IMR-90 (cell line): ENCODE measurements at regions of chr2 and their contacts with region 1.

Region 1: GRCh38 chr2:33275689-33276444 is 200.6 kb upstream of the RASGRP3 start:
- DNase-seq: peak; percentile 96
- ATAC-seq: peak; percentile 79
- H3K4me3 ChIP-seq: no peak overlapping the region
- H3K27ac ChIP-seq: 0 out of 2 replicates have a peak overlapping the region, but pooled peaks have one; percentile 0
- H3K4me1 ChIP-seq: peaks cover 3% of the 10 kb centered on the region; the same call in 1 of the 2 replicates
- H3K27me3 ChIP-seq: no peaks in the 10 kb centered on the region
- CTCF ChIP-seq: no peak
- POLR2A ChIP-seq: no peak
- RAD21 ChIP-seq: no peak

Region 2: DNA sequence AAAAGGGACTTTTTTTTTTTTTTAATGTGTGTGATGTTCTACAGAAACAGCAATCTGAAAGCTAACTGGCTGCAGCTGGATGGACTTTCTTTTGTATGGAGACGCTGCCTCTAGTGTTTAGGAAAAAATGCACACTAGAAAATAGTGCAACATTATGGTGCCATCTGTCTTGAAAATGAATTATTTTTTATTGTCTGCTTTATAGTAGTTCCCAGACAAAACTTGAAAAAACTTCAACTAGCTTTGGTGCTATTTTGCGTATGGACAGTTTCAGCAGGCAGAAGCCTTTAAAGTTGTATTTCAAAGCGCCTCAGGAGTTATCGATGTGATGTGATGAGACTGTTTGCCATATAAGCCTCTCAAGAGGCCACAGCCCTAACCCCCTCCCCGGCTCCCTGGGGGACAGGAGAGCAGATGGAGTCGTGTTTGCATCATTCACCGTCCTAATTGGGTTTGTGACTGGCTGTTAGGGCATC is 242.2 kb before region 1 on chr2:
- CTCF ChIA-PET with region 1: interaction called, 9 read pairs
- POLR2A ChIA-PET with region 1: no interaction called
- dilution Hi-C with region 1: no loop called
- in situ Hi-C with region 1: loop called (anchors 25 kb)
- intact Hi-C with region 1: loop called (anchors 5 kb)
- DNase-seq: peak; percentile 66
- ATAC-seq: peak; percentile 80
- H3K4me3 ChIP-seq: no peak overlapping the region
- H3K27ac ChIP-seq: peak overlapping the region; percentile 42; the same call in 1 of the 2 replicates
- H3K4me1 ChIP-seq: peaks cover 4% of the 10 kb centered on the region
- H3K27me3 ChIP-seq: no peaks in the 10 kb centered on the region
- CTCF ChIP-seq: peak; percentile 75
- POLR2A ChIP-seq: no peak
- RAD21 ChIP-seq: peak; percentile 68

Region 3: GRCh38 chr2:33158482-33159003 is 117.3 kb before region 1 on chr2:
- CTCF ChIA-PET with region 1: no interaction called
- POLR2A ChIA-PET with region 1: no interaction called
- dilution Hi-C with region 1: no loop called
- in situ Hi-C with region 1: no loop called
- intact Hi-C with region 1: no loop called
- DNase-seq: peak; percentile 95
- ATAC-seq: peak; percentile 89
- H3K4me3 ChIP-seq: no peak overlapping the region
- H3K27ac ChIP-seq: peak overlapping the region; percentile 100
- H3K4me1 ChIP-seq: peaks cover 26% of the 10 kb centered on the region
- H3K27me3 ChIP-seq: no peaks in the 10 kb centered on the region
- CTCF ChIP-seq: no peak
- POLR2A ChIP-seq: peak; percentile 38; the same call in 1 of the 2 replicates
- RAD21 ChIP-seq: 0 out of 2 replicates have a peak, but pooled peaks have one; percentile 1

Region 4: GRCh38 chr2:33246432-33246831 is 29.4 kb before region 1 on chr2:
- CTCF ChIA-PET with region 1: no interaction called
- POLR2A ChIA-PET with region 1: no interaction called
- dilution Hi-C with region 1: no loop called
- in situ Hi-C with region 1: no loop called
- intact Hi-C with region 1: no loop called
- DNase-seq: no peak
- ATAC-seq: no peak
- H3K4me3 ChIP-seq: no peak overlapping the region
- H3K27ac ChIP-seq: peak overlapping the region; percentile 3; the same call in 1 of the 2 replicates
- H3K4me1 ChIP-seq: peaks cover 4% of the 10 kb centered on the region
- H3K27me3 ChIP-seq: no peaks in the 10 kb centered on the region
- CTCF ChIP-seq: no peak
- POLR2A ChIP-seq: no peak
- RAD21 ChIP-seq: no peak

Region 5: GRCh38 chr2:33363325-33364298 is 87.7 kb after region 1 on chr2:
- CTCF ChIA-PET with region 1: no interaction called
- POLR2A ChIA-PET with region 1: no interaction called
- dilution Hi-C with region 1: no loop called
- in situ Hi-C with region 1: no loop called
- intact Hi-C with region 1: loop called (anchors 5 kb)
- DNase-seq: peak; percentile 83
- ATAC-seq: peak; percentile 83
- H3K4me3 ChIP-seq: no peak overlapping the region
- H3K27ac ChIP-seq: peak overlapping the region; percentile 26
- H3K4me1 ChIP-seq: no peaks in the 10 kb centered on the region; the same call in 1 of the 2 replicates
- H3K27me3 ChIP-seq: no peaks in the 10 kb centered on the region
- CTCF ChIP-seq: no peak
- POLR2A ChIP-seq: no peak
- RAD21 ChIP-seq: no peak

Region 6: GRCh38 chr2:33636001-33636400 is 360.1 kb after region 1 on chr2:
- CTCF ChIA-PET with region 1: no interaction called
- POLR2A ChIA-PET with region 1: no interaction called
- dilution Hi-C with region 1: no loop called
- in situ Hi-C with region 1: no loop called
- intact Hi-C with region 1: no loop called
- DNase-seq: no peak
- ATAC-seq: no peak
- H3K4me3 ChIP-seq: no peak overlapping the region
- H3K27ac ChIP-seq: no peak overlapping the region
- H3K4me1 ChIP-seq: no peaks in the 10 kb centered on the region
- H3K27me3 ChIP-seq: no peaks in the 10 kb centered on the region; the same call in 1 of the 2 replicates
- CTCF ChIP-seq: no peak
- POLR2A ChIP-seq: no peak
- RAD21 ChIP-seq: no peak